ENCODE measurements at regions of chr11 and their contacts with region 1.

Region 1: DNA sequence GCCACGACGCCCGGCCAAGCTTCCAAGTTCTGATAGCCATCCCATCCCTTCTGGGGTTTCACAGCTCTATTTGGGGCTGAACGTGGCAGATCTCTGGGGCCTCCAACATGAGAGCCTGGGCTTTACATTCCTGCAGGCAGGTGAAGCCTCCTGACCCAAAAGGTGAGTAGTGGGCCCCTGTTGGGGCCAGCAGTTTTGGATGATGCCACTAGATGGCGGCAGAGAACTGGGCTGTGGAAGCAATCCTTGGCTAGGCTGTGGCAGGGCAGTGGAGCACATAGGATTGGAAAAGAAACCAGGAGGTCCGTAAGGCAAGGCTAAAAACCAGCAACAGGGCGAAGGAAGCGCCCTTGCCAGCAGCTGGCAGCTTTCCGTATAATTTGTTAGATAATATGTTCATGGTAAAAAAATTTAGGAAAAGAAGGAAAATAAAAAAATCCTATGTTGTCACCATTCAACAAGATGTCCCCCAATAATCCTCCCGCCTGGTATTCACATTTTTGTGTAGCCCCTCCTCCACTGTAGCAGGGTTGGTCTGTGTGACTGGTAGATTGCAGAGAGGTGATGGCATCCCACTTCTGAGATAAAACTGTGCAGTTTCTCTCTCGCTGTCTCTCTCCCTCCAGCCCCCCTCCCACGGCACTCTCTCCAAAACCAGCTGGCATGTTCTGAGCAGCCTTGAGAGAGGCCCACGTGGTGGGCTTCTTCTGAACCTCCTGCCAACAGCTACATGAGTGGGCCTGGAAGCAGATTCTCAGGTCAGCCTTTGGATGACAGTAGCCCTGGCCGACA is 43.6 kb upstream of the OR4B1 start:
- DNase-seq: no peak
- ATAC-seq: peak; percentile 96
- H3K4me3 ChIP-seq: no peak overlapping the region
- H3K27ac ChIP-seq: no peak overlapping the region
- H3K4me1 ChIP-seq: peaks cover 4% of the 10 kb centered on the region; the same call in 1 of the 2 replicates
- H3K27me3 ChIP-seq: no peaks in the 10 kb centered on the region
- CTCF ChIP-seq: peak; percentile 83 to 99 (median 96)
- EP300 ChIP-seq: no peak
- POLR2A ChIP-seq: no peak
- RAD21 ChIP-seq: peak; percentile 89

Region 2: GRCh38 chr11:49533204-49533603 is 1360.2 kb after region 1 on chr11:
- CTCF ChIA-PET with region 1: no interaction called
- POLR2A ChIA-PET with region 1: no interaction called
- RAD21 ChIA-PET with region 1: no interaction called
- SMC1A ChIA-PET with region 1: no interaction called
- in situ Hi-C with region 1: no loop called
- intact Hi-C with region 1: loop called (anchors 10 kb)
- DNase-seq: no peak
- ATAC-seq: no peak
- H3K4me3 ChIP-seq: no peak overlapping the region
- H3K27ac ChIP-seq: no peak overlapping the region
- H3K4me1 ChIP-seq: no peaks in the 10 kb centered on the region
- H3K27me3 ChIP-seq: no peaks in the 10 kb centered on the region
- CTCF ChIP-seq: no peak
- EP300 ChIP-seq: no peak
- POLR2A ChIP-seq: no peak
- RAD21 ChIP-seq: no peak

Region 3: GRCh38 chr11:49995565-49995964 is 1822.6 kb after region 1 on chr11:
- CTCF ChIA-PET with region 1: interaction called, 3 read pairs
- POLR2A ChIA-PET with region 1: no interaction called
- RAD21 ChIA-PET with region 1: no interaction called
- SMC1A ChIA-PET with region 1: no interaction called
- in situ Hi-C with region 1: no loop called
- intact Hi-C with region 1: loop called (anchors 5 kb)
- DNase-seq: no peak
- ATAC-seq: 0 out of 3 replicates have a peak, but pooled peaks have one; percentile 30
- H3K4me3 ChIP-seq: no peak overlapping the region
- H3K27ac ChIP-seq: no peak overlapping the region
- H3K4me1 ChIP-seq: no peaks in the 10 kb centered on the region
- H3K27me3 ChIP-seq: no peaks in the 10 kb centered on the region
- CTCF ChIP-seq: peak; percentile 39 to 49 (median 46); a peak in 5 of 6 replicates
- EP300 ChIP-seq: no peak
- POLR2A ChIP-seq: no peak
- RAD21 ChIP-seq: peak; percentile 66